CD8-positive, alpha-beta T cell (primary cell): ENCODE measurements at regions of chr17 and their contacts with region 1.

Region 1: GRCh38 chr17:75261336-75262111 is at the starts of genes GGA3 and MRPS7:
- DNase-seq: peak; percentile 93 to 98 (median 96)
- ATAC-seq: peak; percentile 94
- H3K4me3 ChIP-seq: peak within 1 kb of the TSS; percentile 89 to 97
- H3K4me3 Mint-ChIP-seq: peak within 1 kb of the TSS; percentile 99
- H3K27ac ChIP-seq: peak within 1 kb of the TSS; percentile 98 to 100
- H3K27ac Mint-ChIP-seq: peak within 1 kb of the TSS; percentile 100
- H3K4me1 ChIP-seq: peaks cover 27% of the 10 kb centered on the region
- H3K4me1 Mint-ChIP-seq: peaks cover 47% of the 10 kb centered on the region
- H3K27me3 ChIP-seq: no peaks in the 10 kb centered on the region
- H3K27me3 Mint-ChIP-seq: no peaks in the 10 kb centered on the region
- CTCF ChIP-seq: no peak
- total RNA-seq, gene GGA3: 103 to 107 TPM
- total RNA-seq, gene MRPS7: 42.0 to 43.9 TPM

Region 2: GRCh38 chr17:75154195-75155106 is 107.1 kb before region 1 on chr17 and contains the start of gene JPT1:
- CTCF ChIA-PET with region 1: no interaction called
- POLR2A ChIA-PET with region 1: no interaction called
- intact Hi-C with region 1: loop called in 1 of 2 experiments (anchors 1 kb)
- DNase-seq: peak; percentile 94 to 99 (median 97)
- ATAC-seq: peak; percentile 97
- H3K4me3 ChIP-seq: peak within 1 kb of the TSS; percentile 88 to 94
- H3K4me3 Mint-ChIP-seq: peak within 1 kb of the TSS; percentile 91
- H3K27ac ChIP-seq: peak within 1 kb of the TSS; percentile 78 to 81
- H3K27ac Mint-ChIP-seq: peak within 1 kb of the TSS; percentile 87
- H3K4me1 ChIP-seq: peaks cover 23% of the 10 kb centered on the region
- H3K4me1 Mint-ChIP-seq: peaks cover 31% of the 10 kb centered on the region
- H3K27me3 ChIP-seq: no peaks in the 10 kb centered on the region
- H3K27me3 Mint-ChIP-seq: no peaks in the 10 kb centered on the region
- CTCF ChIP-seq: no peak
- total RNA-seq, gene JPT1: 15.1 to 17.3 TPM

Region 3: DNA sequence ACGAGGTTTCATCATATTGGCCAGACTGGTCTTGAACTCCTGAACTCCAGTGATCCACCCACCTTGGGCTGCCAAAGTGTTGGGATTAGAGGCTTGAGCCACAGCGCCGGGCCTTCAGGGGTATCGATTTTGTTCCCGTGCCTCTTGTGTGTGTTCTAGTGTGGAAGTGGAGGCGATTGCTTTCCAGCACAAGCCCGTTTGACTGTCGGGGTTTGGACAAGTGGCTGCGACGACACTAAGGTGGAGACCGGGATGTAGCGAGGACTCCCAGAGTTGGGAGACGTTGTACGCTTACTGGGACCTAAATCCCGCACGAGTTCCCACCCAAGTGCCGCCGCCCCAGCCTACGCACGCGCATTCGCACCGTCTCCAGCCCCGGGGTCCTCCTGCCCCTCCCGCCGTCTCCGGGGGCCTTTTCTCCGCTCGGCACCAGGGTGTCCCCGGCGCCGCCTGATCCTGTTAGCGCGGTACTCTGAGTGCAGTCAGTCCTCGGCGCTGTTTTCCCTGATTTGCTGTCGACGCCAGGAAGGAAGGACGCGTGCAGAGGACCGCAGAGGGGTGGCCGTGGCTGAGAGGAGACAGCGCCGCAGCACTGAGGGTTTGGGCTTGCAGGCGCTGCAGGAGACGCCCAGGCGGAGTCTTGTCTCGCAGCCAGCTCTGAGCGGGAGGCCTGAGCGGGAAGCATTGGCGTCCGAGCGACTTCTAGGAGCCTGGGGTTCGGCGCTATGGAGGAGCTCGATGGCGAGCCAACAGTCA is 56.3 kb before region 1 on chr17 and contains the start of gene NUP85:
- CTCF ChIA-PET with region 1: interaction called, 3 read pairs
- POLR2A ChIA-PET with region 1: no interaction called
- intact Hi-C with region 1: loop called (anchors 1 kb)
- DNase-seq: peak; percentile 84 to 96 (median 92)
- ATAC-seq: peak; percentile 93
- H3K4me3 ChIP-seq: peak within 1 kb of the TSS; percentile 85 to 93
- H3K4me3 Mint-ChIP-seq: peak within 1 kb of the TSS; percentile 94
- H3K27ac ChIP-seq: peak within 1 kb of the TSS; percentile 70 to 89
- H3K27ac Mint-ChIP-seq: peak within 1 kb of the TSS; percentile 99
- H3K4me1 ChIP-seq: peaks cover 19% of the 10 kb centered on the region
- H3K4me1 Mint-ChIP-seq: peaks cover 23% of the 10 kb centered on the region
- H3K27me3 ChIP-seq: no peaks in the 10 kb centered on the region
- H3K27me3 Mint-ChIP-seq: no peaks in the 10 kb centered on the region
- CTCF ChIP-seq: no peak
- total RNA-seq, gene NUP85: 57.4 to 65.3 TPM

Region 4: GRCh38 chr17:75250009-75250471 is 11.5 kb before region 1 on chr17:
- CTCF ChIA-PET with region 1: no interaction called
- POLR2A ChIA-PET with region 1: interaction called, 24 read pairs
- intact Hi-C with region 1: no loop called
- DNase-seq: peak in 8 of 9 experiments; percentile 32 to 71 (median 59)
- ATAC-seq: peak; percentile 97
- H3K4me3 ChIP-seq: peak overlapping the region in 1 of 2 experiments; percentile 1
- H3K4me3 Mint-ChIP-seq: peak overlapping the region; percentile 61
- H3K27ac ChIP-seq: peak overlapping the region; percentile 0 to 62
- H3K27ac Mint-ChIP-seq: peak overlapping the region; percentile 81
- H3K4me1 ChIP-seq: peaks cover 11% of the 10 kb centered on the region
- H3K4me1 Mint-ChIP-seq: peaks cover 42% of the 10 kb centered on the region
- H3K27me3 ChIP-seq: no peaks in the 10 kb centered on the region
- H3K27me3 Mint-ChIP-seq: no peaks in the 10 kb centered on the region
- CTCF ChIP-seq: no peak

Region 5: GRCh38 chr17:75456417-75457046 is 195.0 kb after region 1 on chr17 and contains the start of gene TMEM94:
- CTCF ChIA-PET with region 1: no interaction called
- POLR2A ChIA-PET with region 1: no interaction called
- intact Hi-C with region 1: loop called (anchors 1 kb)
- DNase-seq: peak; percentile 80 to 98 (median 91)
- ATAC-seq: peak; percentile 97
- H3K4me3 ChIP-seq: peak within 1 kb of the TSS; percentile 100
- H3K4me3 Mint-ChIP-seq: peak within 1 kb of the TSS; percentile 96
- H3K27ac ChIP-seq: peak within 1 kb of the TSS; percentile 75 to 82
- H3K27ac Mint-ChIP-seq: peak within 1 kb of the TSS; percentile 92
- H3K4me1 ChIP-seq: peaks cover 16% of the 10 kb centered on the region
- H3K4me1 Mint-ChIP-seq: peaks cover 36% of the 10 kb centered on the region
- H3K27me3 ChIP-seq: no peaks in the 10 kb centered on the region
- H3K27me3 Mint-ChIP-seq: peaks cover 3% of the 10 kb centered on the region
- CTCF ChIP-seq: no peak
- total RNA-seq, gene TMEM94: 44.8 to 46.5 TPM

Region 6: GRCh38 chr17:75667021-75667790 is 405.7 kb after region 1 on chr17 and contains the starts of genes RECQL5 and SAP30BP:
- CTCF ChIA-PET with region 1: no interaction called
- POLR2A ChIA-PET with region 1: no interaction called
- intact Hi-C with region 1: loop called in 1 of 2 experiments (anchors 2 kb)
- DNase-seq: peak; percentile 95 to 99 (median 98)
- ATAC-seq: peak; percentile 100
- H3K4me3 ChIP-seq: peak within 1 kb of the TSS; percentile 78 to 85
- H3K4me3 Mint-ChIP-seq: peak within 1 kb of the TSS; percentile 58
- H3K27ac ChIP-seq: peak within 1 kb of the TSS; percentile 88 to 96
- H3K27ac Mint-ChIP-seq: no peak within 1 kb of the TSS
- H3K4me1 ChIP-seq: peaks cover 18% of the 10 kb centered on the region
- H3K4me1 Mint-ChIP-seq: peaks cover 33% of the 10 kb centered on the region
- H3K27me3 ChIP-seq: no peaks in the 10 kb centered on the region
- H3K27me3 Mint-ChIP-seq: no peaks in the 10 kb centered on the region
- CTCF ChIP-seq: no peak
- total RNA-seq, gene RECQL5: 11.2 to 13.2 TPM
- total RNA-seq, gene SAP30BP: 303 to 305 TPM